Natural killer cell (primary cell): ENCODE measurements at regions of chr11 and their contacts with region 1.

Region 1: GRCh38 chr11:4072668-4073285 is 21.8 kb upstream of the RRM1 start:
- DNase-seq: peak in 1 of 2 donors; percentile 88
- ATAC-seq: peak; percentile 85 to 97 (median 91)
- H3K4me3 ChIP-seq: no peak overlapping the region
- H3K4me3 Mint-ChIP-seq: no peak overlapping the region
- H3K27ac ChIP-seq: peak overlapping the region; percentile 19
- H3K27ac Mint-ChIP-seq: peak overlapping the region; percentile 47 to 64
- H3K4me1 ChIP-seq: peaks cover 6% of the 10 kb centered on the region
- H3K4me1 Mint-ChIP-seq: peaks cover 42 to 47% of the 10 kb centered on the region in 2 donors
- H3K27me3 ChIP-seq: no peaks in the 10 kb centered on the region
- H3K27me3 Mint-ChIP-seq: no peaks in the 10 kb centered on the region
- CTCF ChIP-seq: peak; percentile 79

Region 2: DNA sequence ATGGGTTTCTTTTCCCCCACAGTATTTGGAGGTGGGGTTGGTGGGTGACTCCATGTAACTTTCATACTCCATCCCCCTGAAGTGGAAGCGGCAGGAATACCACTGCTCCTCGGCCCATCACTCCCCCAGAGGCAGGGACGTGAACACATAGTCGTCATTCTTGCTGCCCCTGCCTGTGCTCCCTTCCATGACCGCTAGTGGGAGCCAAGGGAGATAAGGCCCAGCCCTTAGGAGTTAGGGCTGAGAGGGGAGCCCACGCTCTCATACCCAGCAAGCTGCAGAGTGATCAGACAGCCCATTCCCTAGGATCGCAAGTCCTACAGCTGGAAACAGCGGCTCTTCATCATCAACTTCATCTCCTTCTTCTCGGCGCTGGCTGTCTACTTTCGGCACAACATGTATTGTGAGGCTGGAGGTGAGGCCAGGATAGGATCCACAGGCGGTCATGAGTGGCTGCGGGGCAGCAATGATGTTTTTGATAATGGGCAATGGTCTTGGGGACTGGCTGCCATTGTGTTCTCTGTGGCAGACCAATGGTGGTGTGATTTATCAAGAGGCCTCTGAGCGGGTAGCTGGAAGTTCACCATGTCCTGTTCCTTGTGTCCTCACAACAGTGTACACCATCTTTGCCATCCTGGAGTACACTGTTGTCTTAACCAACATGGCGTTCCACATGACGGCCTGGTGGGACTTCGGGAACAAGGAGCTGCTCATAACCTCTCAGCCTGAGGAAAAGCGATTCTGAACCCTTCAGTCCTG is 247.9 kb before region 1 on chr11:
- intact Hi-C with region 1: loop called (anchors 1 kb)
- DNase-seq: peak; percentile 75 to 90
- ATAC-seq: peak; percentile 95 to 99 (median 96)
- H3K4me3 ChIP-seq: no peak overlapping the region
- H3K4me3 Mint-ChIP-seq: no peak overlapping the region
- H3K27ac ChIP-seq: peak overlapping the region; percentile 19
- H3K27ac Mint-ChIP-seq: peak overlapping the region; percentile 81 to 85
- H3K4me1 ChIP-seq: peaks cover 20% of the 10 kb centered on the region
- H3K4me1 Mint-ChIP-seq: peaks cover 36 to 37% of the 10 kb centered on the region in 2 donors
- H3K27me3 ChIP-seq: no peaks in the 10 kb centered on the region
- H3K27me3 Mint-ChIP-seq: no peaks in the 10 kb centered on the region
- CTCF ChIP-seq: peak; percentile 77

Region 3: GRCh38 chr11:3849297-3849874 is 223.4 kb before region 1 on chr11:
- intact Hi-C with region 1: loop called (anchors 1 kb)
- DNase-seq: peak in 1 of 2 donors; percentile 83
- ATAC-seq: peak; percentile 78 to 86 (median 80)
- H3K4me3 ChIP-seq: no peak overlapping the region
- H3K4me3 Mint-ChIP-seq: no peak overlapping the region
- H3K27ac ChIP-seq: no peak overlapping the region
- H3K27ac Mint-ChIP-seq: peak overlapping the region in 1 of 2 donors; percentile 43
- H3K4me1 ChIP-seq: peaks cover 12% of the 10 kb centered on the region
- H3K4me1 Mint-ChIP-seq: peaks cover 24% of the 10 kb centered on the region in 2 donors
- H3K27me3 ChIP-seq: no peaks in the 10 kb centered on the region
- H3K27me3 Mint-ChIP-seq: no peaks in the 10 kb centered on the region
- CTCF ChIP-seq: peak; percentile 73